Body of pancreas (tissue), 4 donors: ENCODE measurements at regions of chr12 and their contacts with region 1.

Region 1: GRCh38 chr12:57213058-57213715 is 3.4 kb upstream of the NXPH4 start:
- DNase-seq: peak; percentile 89 to 91 (median 90)
- ATAC-seq: peak; percentile 82
- H3K4me3 ChIP-seq: no peak overlapping the region
- H3K27ac ChIP-seq: peak overlapping the region in 1 of 4 donors; percentile 54
- H3K4me1 ChIP-seq: peaks cover 41% of the 10 kb centered on the region
- H3K27me3 ChIP-seq: peaks cover 0 to 19% of the 10 kb centered on the region in 2 donors
- CTCF ChIP-seq: peak; percentile 88 to 99 (median 96)
- POLR2A ChIP-seq: peak in 1 of 3 donors; percentile 9

Region 2: DNA sequence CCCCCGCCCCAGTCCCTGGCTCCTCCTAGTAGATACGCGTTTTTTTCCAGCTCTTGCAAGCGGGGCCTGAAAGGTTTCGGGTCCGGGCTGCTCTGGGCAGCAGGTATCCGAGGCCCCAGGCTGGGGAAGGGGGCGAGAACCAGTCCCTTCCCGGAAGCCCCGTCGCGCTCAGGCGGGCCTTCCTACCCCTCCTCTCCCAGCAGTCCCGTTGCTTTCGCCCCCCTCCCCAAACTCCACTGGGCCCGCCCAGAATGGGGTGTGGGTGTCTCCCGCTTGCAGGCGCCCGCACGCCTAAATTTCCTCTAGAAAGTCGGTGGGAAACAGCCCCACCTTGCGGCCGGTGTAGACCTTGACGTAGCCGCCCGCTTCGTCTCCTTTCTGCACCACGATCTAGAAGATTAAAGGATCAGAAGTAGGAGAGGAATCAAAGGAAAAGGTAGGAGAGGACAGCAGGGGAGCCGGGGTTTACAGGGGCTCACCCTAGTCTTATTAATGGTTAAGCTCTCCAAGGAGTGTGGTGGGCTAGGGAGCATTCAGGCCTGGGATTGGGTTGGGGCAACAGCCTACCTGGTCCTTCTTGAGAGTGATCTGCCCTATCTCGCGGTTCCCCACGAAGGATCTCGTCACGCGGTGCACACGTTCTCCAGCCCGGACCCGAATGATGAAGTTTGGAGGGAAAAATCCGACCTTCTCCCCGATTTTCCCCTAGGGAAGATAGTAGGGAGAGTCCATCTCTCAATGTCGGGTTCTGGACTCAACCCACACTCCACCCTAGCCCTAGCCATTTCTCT is 30.5 kb after region 1 on chr12:
- intact Hi-C with region 1: loop called (anchors 2 kb)
- DNase-seq: peak; percentile 81 to 86 (median 84)
- ATAC-seq: peak; percentile 57
- H3K4me3 ChIP-seq: no peak overlapping the region
- H3K27ac ChIP-seq: peak overlapping the region in 1 of 4 donors; percentile 3
- H3K4me1 ChIP-seq: peaks cover 49% of the 10 kb centered on the region
- H3K27me3 ChIP-seq: peaks cover 0 to 22% of the 10 kb centered on the region in 2 donors
- CTCF ChIP-seq: peak; percentile 64 to 81 (median 76)
- POLR2A ChIP-seq: no peak